Vagina (tissue), 2 donors: ENCODE measurements at regions of chr18 and their contacts with region 1.

Region 1: GRCh38 chr18:574865-575645 is 5.1 kb upstream of the CETN1 start:
- DNase-seq: no peak
- H3K4me3 ChIP-seq: no peak overlapping the region
- H3K27ac ChIP-seq: no peak overlapping the region
- H3K4me1 ChIP-seq: peaks cover 16% of the 10 kb centered on the region
- H3K27me3 ChIP-seq: no peaks in the 10 kb centered on the region
- CTCF ChIP-seq: no peak
- POLR2A ChIP-seq: no peak

Region 2: DNA sequence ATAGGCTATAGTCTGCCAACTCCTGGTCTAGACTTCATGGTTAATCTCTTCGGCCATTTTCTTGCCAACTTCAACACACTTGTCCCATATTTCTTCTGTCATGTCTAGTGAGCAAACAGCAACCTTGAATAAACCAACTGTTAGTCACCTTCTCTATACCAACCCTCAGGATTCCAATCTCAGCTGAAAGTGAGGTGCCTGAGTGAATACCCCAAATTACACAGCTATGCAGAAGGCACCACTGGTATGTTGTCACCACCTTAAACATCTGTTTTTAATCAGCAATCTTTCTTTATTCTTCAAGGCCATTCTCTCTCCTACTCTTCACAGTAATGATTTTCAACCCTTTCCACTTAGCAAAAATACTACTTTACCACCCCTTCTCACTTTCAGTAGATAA is 346.5 kb before region 1 on chr18:
- intact Hi-C with region 1: no loop called
- DNase-seq: no peak
- H3K4me3 ChIP-seq: no peak overlapping the region
- H3K27ac ChIP-seq: no peak overlapping the region
- H3K4me1 ChIP-seq: no peaks in the 10 kb centered on the region
- H3K27me3 ChIP-seq: no peaks in the 10 kb centered on the region
- CTCF ChIP-seq: no peak
- POLR2A ChIP-seq: no peak

Region 3: DNA sequence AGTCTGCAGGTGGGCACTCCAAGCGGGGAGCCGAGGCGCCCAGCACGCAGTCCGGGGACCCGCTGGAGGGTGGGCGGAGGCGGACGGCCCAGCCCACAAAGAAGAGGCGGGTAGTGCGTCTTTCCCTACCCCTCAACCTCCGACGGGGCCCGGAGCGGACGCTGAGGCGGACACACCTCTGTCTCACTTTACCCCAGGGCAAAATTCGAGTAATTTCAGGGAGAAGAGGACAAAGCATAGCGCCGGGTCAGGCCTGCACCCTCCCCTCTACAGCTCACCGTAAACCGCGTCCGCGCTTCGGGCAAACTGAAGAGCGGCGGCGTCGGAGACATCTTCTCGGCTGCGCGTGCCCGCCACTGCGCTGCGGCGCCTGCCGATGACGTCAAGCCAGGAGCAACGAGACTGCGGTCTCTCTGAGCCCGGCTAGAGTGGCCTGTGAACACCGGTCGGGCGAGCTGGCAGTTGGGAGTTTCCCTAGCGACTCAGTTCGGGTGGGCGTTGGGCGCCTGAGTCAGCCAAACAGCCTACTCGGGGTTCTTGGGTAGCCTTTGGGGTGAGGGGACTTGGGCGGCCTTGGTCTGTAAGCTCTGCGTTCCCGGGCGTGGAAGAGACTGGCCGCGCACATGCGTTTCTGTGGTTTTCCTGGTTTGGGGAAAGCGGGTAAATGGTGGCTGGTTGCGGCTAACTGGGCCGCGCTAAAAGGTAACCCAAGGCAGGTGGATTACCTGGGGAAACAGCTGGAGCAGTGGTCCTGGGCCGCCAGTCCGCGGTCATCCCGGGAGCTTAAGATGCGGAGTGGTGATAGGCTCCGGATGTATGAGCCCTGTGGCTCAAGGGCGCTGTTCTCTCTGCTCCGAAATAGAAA is 307.1 kb before region 1 on chr18 and contains the start of gene THOC1:
- intact Hi-C with region 1: no loop called
- DNase-seq: peak in 1 of 2 donors; percentile 89
- H3K4me3 ChIP-seq: peak within 1 kb of the TSS; percentile 81 to 95
- H3K27ac ChIP-seq: peak within 1 kb of the TSS; percentile 71
- H3K4me1 ChIP-seq: peaks cover 26% of the 10 kb centered on the region
- H3K27me3 ChIP-seq: no peaks in the 10 kb centered on the region
- CTCF ChIP-seq: no peak
- POLR2A ChIP-seq: peak in 1 of 2 donors; percentile 46
- total RNA-seq, gene THOC1: 47.9 TPM

Region 4: DNA sequence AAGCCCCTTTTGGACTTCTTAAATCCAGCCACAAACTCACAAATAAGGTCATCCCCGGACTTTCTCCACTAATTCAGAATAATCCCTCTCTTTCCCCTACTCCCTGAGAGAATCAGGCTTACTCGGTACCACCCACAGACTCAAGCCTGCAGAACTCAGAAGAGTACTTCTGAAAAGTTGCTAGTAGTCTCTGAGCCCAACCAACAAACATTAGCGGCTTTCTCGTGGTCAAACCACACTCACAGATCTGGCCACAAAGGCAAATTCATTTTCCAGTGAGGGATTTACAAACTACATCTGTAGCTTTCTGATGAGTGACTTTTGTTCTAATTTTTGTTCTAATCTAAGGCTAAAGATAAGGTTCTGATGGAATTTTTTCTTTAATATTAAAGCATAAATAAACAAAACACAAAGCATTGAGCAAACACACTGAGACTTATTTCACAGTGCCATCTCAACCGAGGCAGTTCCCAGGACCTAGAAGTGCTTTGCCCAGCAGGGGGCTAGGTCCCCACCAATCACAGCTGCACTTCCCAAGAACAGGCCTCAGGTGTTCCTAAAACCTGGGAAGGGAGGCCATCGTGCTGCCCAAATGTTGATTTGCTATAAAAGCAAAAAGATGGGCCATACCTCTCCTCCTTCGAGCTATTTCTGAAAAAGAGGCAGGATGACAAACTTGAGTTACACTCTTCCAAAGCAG is 185.2 kb before region 1 on chr18:
- intact Hi-C with region 1: no loop called
- DNase-seq: no peak
- H3K4me3 ChIP-seq: no peak overlapping the region
- H3K27ac ChIP-seq: no peak overlapping the region
- H3K4me1 ChIP-seq: peaks cover 7% of the 10 kb centered on the region
- H3K27me3 ChIP-seq: peaks cover 4% of the 10 kb centered on the region
- CTCF ChIP-seq: no peak
- POLR2A ChIP-seq: no peak

Region 5: DNA sequence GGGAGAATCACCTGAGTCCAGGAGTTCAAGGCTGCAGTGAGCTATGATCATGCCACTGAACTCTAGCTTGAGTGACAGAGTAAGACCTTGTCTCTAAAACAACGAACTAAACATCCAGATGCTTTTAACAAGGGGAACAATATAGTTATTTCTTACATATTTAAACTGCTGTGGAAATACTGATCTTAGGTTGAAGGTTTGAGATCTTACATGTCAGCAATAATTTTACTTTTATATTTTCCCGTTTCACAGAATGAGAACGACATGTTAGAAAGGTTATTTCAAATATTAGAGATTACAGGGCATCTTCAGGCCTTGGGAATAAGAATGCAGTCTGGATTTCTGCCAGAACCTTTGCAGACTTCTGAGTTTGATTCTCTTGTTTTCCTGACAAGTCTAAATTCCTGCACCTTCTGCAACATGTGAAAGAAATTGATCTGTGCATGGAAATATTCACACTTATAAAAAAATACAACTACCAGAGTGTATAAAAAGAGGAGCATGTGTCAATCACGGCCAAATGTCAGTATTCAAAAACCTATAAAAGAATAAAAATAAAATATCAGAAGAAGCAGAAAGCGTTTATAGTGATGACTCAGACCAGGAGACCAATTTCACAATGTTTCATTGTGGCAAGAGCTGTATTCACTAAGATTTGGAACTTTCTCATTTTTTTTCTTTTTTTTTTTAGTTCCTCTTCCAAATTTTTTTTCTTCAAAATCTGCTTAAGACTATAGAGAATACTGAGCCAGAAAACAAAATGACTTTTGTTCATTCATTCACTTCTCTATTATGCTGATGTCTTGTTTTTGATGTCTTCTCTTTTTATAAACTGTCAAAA is 104.2 kb before region 1 on chr18:
- intact Hi-C with region 1: loop called (anchors 5 kb)
- DNase-seq: no peak
- H3K4me3 ChIP-seq: no peak overlapping the region
- H3K27ac ChIP-seq: no peak overlapping the region
- H3K4me1 ChIP-seq: peaks cover 4% of the 10 kb centered on the region
- H3K27me3 ChIP-seq: no peaks in the 10 kb centered on the region
- CTCF ChIP-seq: no peak
- POLR2A ChIP-seq: no peak